Activated B cell treated with CpG ODN at 0.5 μM for 24 hours (primary cell): ENCODE measurements at regions of chr1 and their contacts with region 1.

Region 1: GRCh38 chr1:165768513-165769394 is at the start of gene TMCO1:
- DNase-seq: peak; percentile 84
- ATAC-seq: peak; percentile 95
- H3K4me3 Mint-ChIP-seq: peak within 1 kb of the TSS; percentile 97
- H3K27ac Mint-ChIP-seq: peak within 1 kb of the TSS; percentile 98
- H3K4me1 Mint-ChIP-seq: peaks cover 54% of the 10 kb centered on the region
- H3K27me3 Mint-ChIP-seq: no peaks in the 10 kb centered on the region
- CTCF ChIP-seq: no peak
- total RNA-seq, gene TMCO1: 43.0 and 48.3 TPM in 2 replicates

Region 2: DNA sequence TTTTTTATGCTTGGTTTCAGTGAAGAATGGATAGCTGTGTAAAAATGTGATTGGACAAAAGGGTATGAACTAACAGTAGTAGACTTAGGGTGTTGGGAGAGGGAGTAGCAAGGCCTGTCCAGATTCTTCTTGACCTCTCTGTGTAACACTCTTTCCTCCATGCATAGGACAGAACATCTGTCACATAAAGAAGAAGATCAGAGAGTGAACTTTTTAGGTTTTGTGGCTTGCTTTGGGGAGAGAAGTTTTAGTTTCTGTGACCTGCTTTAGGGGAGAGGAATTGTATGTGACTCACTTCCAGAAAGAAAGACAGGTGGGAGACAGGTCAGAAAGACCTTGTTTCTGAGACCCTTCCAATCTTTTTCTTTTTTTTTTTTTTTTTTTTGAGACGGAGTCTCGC is 252.3 kb before region 1 on chr1:
- CTCF ChIA-PET with region 1: no interaction called
- POLR2A ChIA-PET with region 1: no interaction called
- intact Hi-C with region 1: no loop called
- DNase-seq: no peak
- ATAC-seq: no peak
- H3K4me3 Mint-ChIP-seq: no peak overlapping the region
- H3K27ac Mint-ChIP-seq: no peak overlapping the region
- H3K4me1 Mint-ChIP-seq: no peaks in the 10 kb centered on the region
- H3K27me3 Mint-ChIP-seq: peaks cover 14% of the 10 kb centered on the region
- CTCF ChIP-seq: no peak

Region 3: DNA sequence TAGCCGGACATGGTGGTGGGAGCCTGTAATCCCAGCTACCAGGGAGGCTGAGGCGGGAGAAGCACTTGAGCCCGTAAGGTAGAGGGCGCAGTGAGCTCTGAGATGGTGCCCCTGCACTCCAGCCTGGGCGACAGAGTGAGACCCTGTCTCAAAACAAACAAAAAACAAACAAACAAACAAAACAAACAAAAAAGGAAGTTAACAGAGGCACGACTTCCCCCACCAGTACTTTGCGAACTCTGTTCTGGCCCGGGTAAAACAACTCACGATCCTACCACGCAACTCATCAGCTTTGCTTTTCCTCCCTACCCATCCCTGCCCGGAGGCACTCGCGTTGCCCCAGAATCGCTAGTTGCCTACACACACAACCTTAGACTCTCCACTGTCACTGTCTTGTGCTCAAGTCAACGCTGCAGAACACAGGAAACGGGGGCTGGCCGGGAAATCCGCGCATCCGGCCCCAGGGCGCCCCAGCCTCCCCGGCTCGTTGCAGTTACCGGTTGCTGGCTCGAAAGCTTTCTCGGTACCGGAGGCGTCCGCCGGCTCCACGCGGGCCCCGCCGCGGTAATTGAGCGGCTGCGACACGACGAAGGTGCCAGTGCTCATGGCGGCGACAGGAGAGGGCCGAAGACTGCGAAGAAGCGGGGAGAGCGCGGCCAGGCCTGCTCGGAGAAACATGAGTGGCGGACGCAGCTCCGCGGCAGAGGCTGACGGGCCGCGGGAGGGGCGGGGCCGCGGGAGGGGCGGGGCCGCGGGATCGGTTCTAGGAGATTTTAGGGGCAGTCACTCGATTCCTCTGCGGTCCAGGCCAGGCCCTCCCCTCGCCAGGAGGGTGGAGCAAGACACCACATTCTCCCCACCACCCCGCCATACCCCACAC is 70.6 kb before region 1 on chr1 and contains the start of gene ALDH9A1:
- CTCF ChIA-PET with region 1: no interaction called
- POLR2A ChIA-PET with region 1: interaction called, 22 read pairs
- intact Hi-C with region 1: loop called (anchors 1 kb)
- DNase-seq: peak; percentile 86
- ATAC-seq: peak; percentile 93
- H3K4me3 Mint-ChIP-seq: peak within 1 kb of the TSS; percentile 91
- H3K27ac Mint-ChIP-seq: peak within 1 kb of the TSS; percentile 91
- H3K4me1 Mint-ChIP-seq: peaks cover 27% of the 10 kb centered on the region
- H3K27me3 Mint-ChIP-seq: peaks cover 4% of the 10 kb centered on the region
- CTCF ChIP-seq: no peak
- total RNA-seq, gene ALDH9A1: 30.3 and 35.8 TPM in 2 replicates

Region 4: GRCh38 chr1:165871311-165872067 is 102.7 kb after region 1 on chr1:
- CTCF ChIA-PET with region 1: no interaction called
- POLR2A ChIA-PET with region 1: interaction called, 6 read pairs
- intact Hi-C with region 1: loop called (anchors 2 kb)
- DNase-seq: no peak
- ATAC-seq: peak; percentile 76
- H3K4me3 Mint-ChIP-seq: peak overlapping the region; percentile 33
- H3K27ac Mint-ChIP-seq: peak overlapping the region; percentile 76
- H3K4me1 Mint-ChIP-seq: peaks cover 28% of the 10 kb centered on the region
- H3K27me3 Mint-ChIP-seq: no peaks in the 10 kb centered on the region
- CTCF ChIP-seq: no peak

Region 5: DNA sequence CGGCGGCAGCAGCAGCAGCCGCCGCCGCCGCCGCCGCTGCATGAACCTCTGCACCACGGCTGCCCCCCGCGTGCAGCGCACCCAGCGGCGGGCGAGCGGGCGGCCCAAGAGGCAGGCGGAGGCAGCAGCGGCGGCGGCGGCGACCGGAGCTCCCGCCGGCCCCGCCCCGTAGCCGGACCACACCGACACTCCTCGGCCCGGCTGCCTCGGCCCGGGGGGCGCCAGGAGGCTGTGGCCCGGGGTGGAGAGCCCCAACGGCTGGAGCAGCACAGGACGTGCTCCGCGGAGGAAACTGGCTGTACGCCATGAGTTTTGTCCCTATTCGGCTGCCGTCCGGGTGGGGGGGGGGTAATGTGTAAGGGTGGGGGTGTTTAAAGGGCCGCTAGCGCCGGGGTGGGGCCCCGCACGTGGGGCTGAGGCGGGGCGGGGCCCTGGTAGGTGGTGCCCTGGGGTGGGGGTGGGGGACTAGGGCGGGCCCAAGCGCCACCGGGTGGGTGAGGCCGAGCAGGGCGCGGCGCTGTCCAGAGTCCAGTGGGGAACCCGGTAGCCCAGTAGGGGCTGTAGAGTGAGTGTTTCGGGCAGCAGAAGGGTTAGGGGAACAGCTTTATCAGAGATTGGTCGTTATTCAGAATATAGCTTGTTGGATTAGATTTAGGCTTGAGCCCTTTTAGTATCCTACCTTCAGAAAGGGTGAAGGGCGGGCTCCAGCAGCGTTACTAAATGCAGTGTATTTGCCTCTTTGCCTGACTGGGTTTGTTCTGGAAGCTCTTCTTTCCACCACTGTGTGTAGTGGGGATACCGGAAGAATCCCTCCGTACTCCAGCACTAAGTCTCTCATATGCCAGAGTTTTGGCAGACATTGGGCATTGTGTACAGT is 398.2 kb after region 1 on chr1 and contains the start of gene FAM78B:
- CTCF ChIA-PET with region 1: no interaction called
- POLR2A ChIA-PET with region 1: no interaction called
- intact Hi-C with region 1: loop called (anchors 5 kb)
- DNase-seq: peak; percentile 55
- ATAC-seq: peak; percentile 84
- H3K4me3 Mint-ChIP-seq: peak within 1 kb of the TSS; percentile 77
- H3K27ac Mint-ChIP-seq: no peak within 1 kb of the TSS
- H3K4me1 Mint-ChIP-seq: peaks cover 19% of the 10 kb centered on the region
- H3K27me3 Mint-ChIP-seq: peaks cover 25% of the 10 kb centered on the region
- CTCF ChIP-seq: no peak
- total RNA-seq, gene FAM78B: 0.64 and 1.00 TPM in 2 replicates

Region 6: DNA sequence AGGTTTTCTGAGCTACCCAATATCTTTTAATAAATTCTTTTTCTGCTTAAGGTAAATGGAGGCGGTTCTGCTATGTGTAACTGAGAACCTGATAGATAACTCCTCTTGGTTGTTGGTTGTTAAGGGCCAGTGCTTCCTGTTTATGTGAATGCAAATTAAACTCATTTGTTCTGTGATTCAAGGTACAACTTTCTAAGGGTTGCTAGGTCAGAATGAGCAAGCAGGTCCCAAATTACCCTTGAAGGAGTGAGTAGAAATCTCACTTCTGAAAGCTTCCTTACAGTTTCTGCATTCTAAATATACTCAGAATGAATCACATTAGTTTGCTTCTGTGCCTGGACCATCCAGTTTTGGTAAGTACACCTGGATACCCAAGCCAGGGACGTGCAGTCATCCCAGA is 413.5 kb after region 1 on chr1:
- CTCF ChIA-PET with region 1: no interaction called
- POLR2A ChIA-PET with region 1: no interaction called
- intact Hi-C with region 1: no loop called
- DNase-seq: no peak
- ATAC-seq: no peak
- H3K4me3 Mint-ChIP-seq: no peak overlapping the region
- H3K27ac Mint-ChIP-seq: no peak overlapping the region
- H3K4me1 Mint-ChIP-seq: no peaks in the 10 kb centered on the region
- H3K27me3 Mint-ChIP-seq: peaks cover 9% of the 10 kb centered on the region
- CTCF ChIP-seq: no peak

Region 7: DNA sequence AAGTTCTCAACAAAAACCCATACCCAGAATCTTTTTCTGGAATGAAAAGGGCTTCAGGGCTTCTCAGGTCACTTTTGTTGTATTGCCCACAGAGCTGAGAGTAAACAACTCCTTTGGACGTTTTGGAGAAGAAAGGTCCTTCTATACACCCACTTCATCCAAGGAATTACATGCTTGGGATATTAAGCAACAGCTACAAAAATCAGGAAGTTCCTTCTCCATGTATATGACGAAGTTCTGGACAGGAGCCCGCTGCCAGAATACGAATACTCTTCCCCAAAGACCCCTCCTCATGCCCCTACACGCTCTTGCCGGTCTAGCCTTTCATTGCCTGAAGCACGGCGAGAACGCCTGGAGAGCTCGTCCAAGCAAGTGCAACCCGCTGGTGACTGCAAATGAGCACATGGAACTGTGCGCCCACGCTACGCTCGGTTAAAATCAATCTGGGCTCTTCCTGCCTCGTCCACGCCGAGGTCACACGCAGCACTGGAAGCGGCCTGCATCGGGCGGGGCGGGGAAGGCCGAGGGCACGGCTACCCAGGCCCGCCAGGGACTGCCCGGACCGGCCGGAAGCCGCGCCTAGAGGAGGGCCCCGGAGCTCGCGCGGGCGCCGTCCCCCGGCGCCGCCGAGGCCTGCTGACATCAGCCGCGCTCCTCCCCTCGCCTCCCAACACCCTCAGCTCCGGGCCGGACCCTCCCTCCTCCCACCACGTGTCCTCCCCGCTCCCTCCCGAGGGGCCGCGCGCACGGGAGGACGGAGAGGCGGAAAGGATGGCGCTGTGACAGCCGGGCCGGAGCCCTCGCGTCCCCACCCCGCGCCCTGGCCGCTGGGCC is 1070.2 kb after region 1 on chr1 and contains the start of gene POGK:
- CTCF ChIA-PET with region 1: no interaction called
- POLR2A ChIA-PET with region 1: no interaction called
- intact Hi-C with region 1: loop called (anchors 2 kb)
- DNase-seq: peak; percentile 84
- ATAC-seq: peak; percentile 94
- H3K4me3 Mint-ChIP-seq: peak within 1 kb of the TSS; percentile 92
- H3K27ac Mint-ChIP-seq: peak within 1 kb of the TSS; percentile 96
- H3K4me1 Mint-ChIP-seq: peaks cover 29% of the 10 kb centered on the region
- H3K27me3 Mint-ChIP-seq: peaks cover 2% of the 10 kb centered on the region
- CTCF ChIP-seq: no peak
- total RNA-seq, gene POGK: 37.8 and 39.1 TPM in 2 replicates